GM12878 (cell line): ENCODE measurements at regions of chr4 and their contacts with region 1.

Region 1: DNA sequence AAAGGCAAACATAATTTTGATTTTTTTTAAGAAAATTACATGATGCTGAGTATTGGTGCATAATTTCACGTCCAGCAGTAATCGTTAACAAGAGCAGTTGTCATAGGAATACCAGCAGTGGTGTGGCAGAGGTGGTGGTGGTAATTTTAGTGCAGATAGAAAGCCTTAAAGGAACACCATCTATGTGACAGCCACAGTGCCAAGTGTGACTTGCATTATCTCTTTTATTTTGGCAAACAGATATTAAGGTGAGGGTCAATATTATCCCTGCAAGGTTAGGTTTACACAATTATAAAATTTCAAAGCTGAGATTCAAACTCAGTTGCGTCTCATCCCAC is 944.1 kb upstream of the GRID2 start:
- DNase-seq: no peak
- ATAC-seq: peak; percentile 42
- H3K4me3 ChIP-seq: no peak overlapping the region
- H3K27ac ChIP-seq: no peak overlapping the region
- H3K4me1 ChIP-seq: no peaks in the 10 kb centered on the region
- H3K27me3 ChIP-seq: no peaks in the 10 kb centered on the region
- CTCF ChIP-seq: no peak
- EP300 ChIP-seq: no peak
- POLR2A ChIP-seq: no peak
- RAD21 ChIP-seq: no peak

Region 2: GRCh38 chr4:91436556-91436955 is 76.9 kb after region 1 on chr4:
- CTCF ChIA-PET with region 1: no interaction called
- POLR2A ChIA-PET with region 1: no interaction called
- RAD21 ChIA-PET with region 1: no interaction called
- SMC1A ChIA-PET with region 1: no interaction called
- in situ Hi-C with region 1: no loop called
- intact Hi-C with region 1: loop called (anchors 2 kb)
- DNase-seq: no peak
- ATAC-seq: peak; percentile 53
- H3K4me3 ChIP-seq: no peak overlapping the region
- H3K27ac ChIP-seq: no peak overlapping the region
- H3K4me1 ChIP-seq: no peaks in the 10 kb centered on the region
- H3K27me3 ChIP-seq: no peaks in the 10 kb centered on the region
- CTCF ChIP-seq: no peak
- EP300 ChIP-seq: no peak
- POLR2A ChIP-seq: no peak
- RAD21 ChIP-seq: no peak

Region 3: DNA sequence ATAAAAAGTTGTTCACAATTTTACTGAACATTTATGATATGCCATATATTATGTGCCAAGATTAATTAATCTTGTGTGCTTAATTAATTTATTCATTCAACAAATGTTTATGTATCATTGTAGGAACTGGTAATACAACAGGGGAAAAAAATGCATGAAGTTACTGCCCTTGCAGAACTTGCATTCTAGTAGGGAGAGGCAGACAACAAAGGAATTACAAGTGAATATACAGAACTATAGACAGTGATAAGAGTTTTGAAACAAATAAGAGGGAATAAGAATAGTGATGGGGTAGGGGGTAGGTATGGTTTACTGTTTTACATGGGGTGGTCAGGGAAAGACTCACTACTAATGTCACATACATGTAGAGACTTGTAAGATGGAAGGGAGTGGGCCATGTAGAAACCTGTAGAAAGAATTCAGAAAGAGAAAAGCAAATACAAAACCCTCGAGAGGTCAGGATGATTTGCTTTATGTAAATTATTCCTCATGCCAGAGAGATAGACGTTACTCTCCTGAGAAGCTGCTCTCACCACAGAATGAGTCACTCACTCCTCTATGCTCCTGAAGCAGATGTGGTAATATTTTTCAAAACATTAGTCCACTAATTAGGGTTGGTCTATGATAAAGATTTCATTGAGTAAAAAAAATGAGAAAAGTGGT is 89.1 kb after region 1 on chr4:
- CTCF ChIA-PET with region 1: no interaction called
- POLR2A ChIA-PET with region 1: no interaction called
- RAD21 ChIA-PET with region 1: no interaction called
- SMC1A ChIA-PET with region 1: no interaction called
- in situ Hi-C with region 1: no loop called
- intact Hi-C with region 1: no loop called
- DNase-seq: no peak
- ATAC-seq: peak; percentile 75
- H3K4me3 ChIP-seq: no peak overlapping the region
- H3K27ac ChIP-seq: no peak overlapping the region
- H3K4me1 ChIP-seq: no peaks in the 10 kb centered on the region
- H3K27me3 ChIP-seq: no peaks in the 10 kb centered on the region
- CTCF ChIP-seq: no peak
- EP300 ChIP-seq: no peak
- POLR2A ChIP-seq: no peak
- RAD21 ChIP-seq: no peak